ENCODE measurements at regions of chr12 and their contacts with region 1.

Region 1: DNA sequence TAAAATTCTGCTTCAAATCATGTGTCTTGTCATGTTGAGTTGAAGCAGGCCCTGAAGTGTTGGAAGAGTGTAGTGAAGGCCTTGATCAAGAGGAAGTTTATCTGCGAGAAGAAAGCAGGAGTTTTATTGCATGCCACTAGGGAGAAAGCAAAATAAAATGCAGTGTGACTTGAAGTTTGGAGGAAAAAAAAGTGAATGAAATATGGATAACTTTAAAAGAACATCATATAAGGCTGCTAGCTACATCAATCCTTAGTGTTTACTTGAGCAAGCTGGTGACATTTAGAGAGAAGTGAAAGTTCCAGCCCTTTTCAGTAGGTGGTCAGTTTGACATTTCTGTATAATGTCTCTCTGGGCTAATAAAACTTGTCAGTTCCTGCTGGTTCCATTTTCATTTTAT is 841.1 kb downstream of the TMTC2 start:
- DNase-seq: no peak

Region 2: DNA sequence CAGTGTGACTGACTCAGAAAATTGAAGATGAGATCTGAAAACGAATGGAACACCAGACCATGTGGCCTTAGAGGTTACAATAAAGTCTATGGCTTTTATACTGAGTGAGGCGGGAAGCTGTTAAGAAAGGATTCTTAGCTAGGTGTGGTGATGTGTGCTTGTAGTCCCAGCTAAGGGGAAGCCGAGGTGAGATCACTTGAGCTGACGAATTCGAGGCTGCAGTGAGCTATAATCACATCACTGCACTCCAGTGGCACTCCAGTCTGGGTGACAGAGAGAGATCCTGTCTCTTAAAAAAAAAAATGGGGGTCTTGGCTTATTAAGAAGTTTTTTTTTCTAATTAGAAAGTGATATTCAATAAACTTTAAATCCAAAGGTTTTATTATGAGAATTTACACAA is 162.5 kb before region 1 on chr12:
- intact Hi-C with region 1: no loop called
- DNase-seq: no peak

Region 3: GRCh38 chr12:84480803-84481202 is 953.0 kb after region 1 on chr12:
- intact Hi-C with region 1: no loop called
- DNase-seq: no peak

Region 4: GRCh38 chr12:84862186-84862585 is 1334.4 kb after region 1 on chr12:
- intact Hi-C with region 1: loop called in 1 of 2 experiments (anchors 5 kb)
- DNase-seq: no peak